Body of pancreas (tissue), 4 donors: ENCODE measurements at regions of chr3 and their contacts with region 1.

Region 1: GRCh38 chr3:148943506-148944205 is 47.7 kb upstream of the GYG1 start:
- DNase-seq: peak in 2 of 4 donors; percentile 32 to 48
- ATAC-seq: peak; percentile 83
- H3K4me3 ChIP-seq: no peak overlapping the region
- H3K27ac ChIP-seq: no peak overlapping the region
- H3K4me1 ChIP-seq: peaks cover 2% of the 10 kb centered on the region
- H3K27me3 ChIP-seq: no peaks in the 10 kb centered on the region
- CTCF ChIP-seq: peak in 6 of 7 experiments; percentile 53 to 86 (median 79)
- POLR2A ChIP-seq: no peak

Region 2: DNA sequence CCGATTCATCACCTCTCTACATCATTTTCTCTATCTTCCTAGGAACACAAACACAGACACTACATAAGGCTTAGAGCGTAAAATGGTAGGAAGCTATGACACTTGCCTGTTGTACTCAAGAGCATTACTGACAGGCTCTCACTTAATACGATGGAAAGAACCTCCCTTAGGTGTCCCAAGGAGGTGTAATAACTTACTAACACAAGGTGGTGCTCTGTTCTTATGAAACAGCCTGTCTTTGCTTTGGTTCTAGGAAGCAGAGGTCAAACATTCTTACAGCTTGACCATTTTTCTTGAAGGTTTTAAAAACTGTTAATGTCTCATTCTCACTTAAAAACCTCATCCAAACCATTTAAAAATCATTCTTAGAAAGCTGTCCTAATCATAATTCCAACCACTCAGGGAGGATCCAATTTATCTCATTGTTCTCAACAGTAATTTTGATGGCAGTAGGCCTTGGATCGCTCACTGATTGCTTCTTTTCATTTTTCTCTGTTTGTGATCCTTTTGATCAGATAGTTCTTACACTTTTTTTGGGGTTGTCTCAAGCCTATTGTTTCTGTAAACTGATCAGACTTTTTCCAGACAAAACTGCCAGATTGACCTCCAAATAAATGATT is 563.8 kb before region 1 on chr3:
- intact Hi-C with region 1: loop called (anchors 10 kb)
- DNase-seq: peak in 1 of 4 donors; percentile 26
- ATAC-seq: peak; percentile 87
- H3K4me3 ChIP-seq: no peak overlapping the region
- H3K27ac ChIP-seq: no peak overlapping the region
- H3K4me1 ChIP-seq: no peaks in the 10 kb centered on the region
- H3K27me3 ChIP-seq: no peaks in the 10 kb centered on the region
- CTCF ChIP-seq: peak; percentile 14 to 81 (median 65)
- POLR2A ChIP-seq: no peak

Region 3: GRCh38 chr3:148861277-148861869 is 82.3 kb before region 1 on chr3:
- intact Hi-C with region 1: loop called (anchors 10 kb)
- DNase-seq: no peak
- ATAC-seq: peak; percentile 47
- H3K4me3 ChIP-seq: no peak overlapping the region
- H3K27ac ChIP-seq: peak overlapping the region in 2 of 4 donors; percentile 61 to 70
- H3K4me1 ChIP-seq: peaks cover 30% of the 10 kb centered on the region
- H3K27me3 ChIP-seq: no peaks in the 10 kb centered on the region
- CTCF ChIP-seq: peak; percentile 55 to 93 (median 80)
- POLR2A ChIP-seq: peak in 1 of 3 donors; percentile 35